K562 (cell line): ENCODE measurements at regions of chr4 and their contacts with region 1.

Region 1: GRCh38 chr4:87196927-87197326 is 23.5 kb downstream of the KLHL8 start:
- DNase-seq: no peak
- ATAC-seq: no peak
- H3K4me3 ChIP-seq: no peak overlapping the region
- H3K27ac ChIP-seq: no peak overlapping the region
- H3K4me1 ChIP-seq: no peaks in the 10 kb centered on the region
- H3K27me3 ChIP-seq: no peaks in the 10 kb centered on the region
- CTCF ChIP-seq: no peak
- EP300 ChIP-seq: no peak
- POLR2A ChIP-seq: no peak
- RAD21 ChIP-seq: no peak

Region 2: DNA sequence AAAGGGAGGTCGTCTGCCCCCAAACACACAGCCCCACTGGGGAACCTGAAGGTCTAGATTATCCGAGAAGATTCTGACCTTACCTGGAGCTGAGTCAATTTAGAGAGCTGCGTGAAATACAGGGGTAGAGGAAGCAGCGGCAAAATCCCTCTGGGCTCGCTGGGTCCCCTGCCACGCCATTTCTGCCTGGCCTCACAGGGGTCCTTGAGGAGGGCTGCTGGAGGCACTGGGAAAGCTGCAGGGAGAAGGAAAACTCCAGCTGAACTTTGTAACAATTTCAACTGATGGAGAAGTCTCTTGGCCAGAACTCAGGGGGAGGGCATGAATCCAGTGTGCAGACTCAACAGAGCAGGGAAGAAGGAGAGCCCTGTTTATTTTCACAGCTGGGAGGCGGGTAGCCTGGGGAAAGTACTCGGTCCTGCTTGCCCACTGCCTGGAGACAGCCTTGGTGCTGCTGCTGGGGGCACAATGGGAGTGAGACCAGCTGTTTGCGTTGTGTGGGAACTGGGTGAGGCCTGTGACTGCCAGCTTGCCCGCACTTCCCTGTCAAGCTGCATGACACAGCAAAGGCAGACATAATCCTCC is 743.9 kb before region 1 on chr4:
- CTCF ChIA-PET with region 1: no interaction called
- POLR2A ChIA-PET with region 1: no interaction called
- in situ Hi-C with region 1: no loop called
- intact Hi-C with region 1: no loop called
- DNase-seq: no peak
- ATAC-seq: no peak
- H3K4me3 ChIP-seq: no peak overlapping the region
- H3K27ac ChIP-seq: no peak overlapping the region
- H3K4me1 ChIP-seq: no peaks in the 10 kb centered on the region
- H3K27me3 ChIP-seq: no peaks in the 10 kb centered on the region
- CTCF ChIP-seq: no peak
- EP300 ChIP-seq: no peak
- POLR2A ChIP-seq: no peak
- RAD21 ChIP-seq: no peak

Region 3: DNA sequence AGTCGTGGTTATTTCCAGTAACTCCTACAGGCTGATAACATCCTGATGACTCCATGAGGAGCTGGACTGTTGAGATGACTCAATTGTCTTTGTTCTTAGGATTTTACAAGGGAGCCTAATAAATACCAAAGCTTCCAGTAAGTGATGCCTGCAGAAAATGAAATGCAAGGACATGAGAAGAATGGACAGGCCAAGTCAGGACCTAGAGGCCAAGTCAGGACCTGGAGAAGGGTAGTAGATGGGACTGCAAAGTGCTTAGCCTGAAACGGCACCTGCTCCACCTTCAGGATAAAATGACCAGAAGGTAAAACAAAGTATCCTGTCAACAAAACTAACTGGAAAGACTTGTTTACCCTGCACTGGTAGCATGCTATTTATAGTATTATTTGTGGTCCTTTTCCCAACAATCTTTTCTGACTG is 341.3 kb before region 1 on chr4:
- CTCF ChIA-PET with region 1: no interaction called
- POLR2A ChIA-PET with region 1: no interaction called
- in situ Hi-C with region 1: no loop called
- intact Hi-C with region 1: no loop called
- DNase-seq: no peak
- ATAC-seq: no peak
- H3K4me3 ChIP-seq: no peak overlapping the region
- H3K27ac ChIP-seq: no peak overlapping the region
- H3K4me1 ChIP-seq: no peaks in the 10 kb centered on the region
- H3K27me3 ChIP-seq: no peaks in the 10 kb centered on the region; a peak in 1 of 5 replicates
- CTCF ChIP-seq: no peak
- EP300 ChIP-seq: no peak
- POLR2A ChIP-seq: no peak
- RAD21 ChIP-seq: no peak

Region 4: DNA sequence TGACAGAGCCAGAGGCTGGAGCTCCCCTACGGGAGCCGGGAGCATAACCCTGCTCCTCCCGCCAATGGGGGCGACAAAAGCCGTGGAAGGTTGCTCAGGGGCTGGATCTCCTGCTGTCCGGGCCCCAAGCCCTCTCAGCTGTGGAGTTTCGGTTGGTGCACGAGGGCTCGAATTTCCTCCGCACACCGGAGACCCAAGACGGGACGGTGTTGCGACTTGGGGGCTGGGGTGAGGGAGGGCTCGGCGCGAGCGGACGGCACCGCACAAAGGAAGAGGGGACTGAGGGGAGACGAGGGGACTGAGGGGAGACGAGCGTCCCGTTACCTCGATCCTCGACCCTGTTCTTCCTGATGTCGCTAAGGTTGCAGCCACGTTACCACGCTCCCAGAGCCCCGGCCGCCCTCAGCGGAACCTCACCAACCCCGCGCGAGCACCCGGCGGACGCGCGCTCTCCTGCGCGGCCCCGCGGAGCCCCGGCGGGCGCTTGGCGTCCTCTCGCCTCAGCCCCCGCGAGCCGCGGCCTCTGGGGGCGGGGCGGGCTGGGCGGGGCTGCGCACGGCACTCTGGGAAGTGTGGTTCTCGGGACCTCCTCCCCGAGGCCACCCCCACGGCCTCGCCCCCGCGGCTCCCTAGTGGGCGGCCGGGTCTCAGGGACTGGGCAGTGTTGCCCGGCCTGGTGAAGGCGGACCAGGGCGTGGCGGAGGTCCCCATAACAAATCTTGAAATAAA is 23.3 kb after region 1 on chr4 and contains the start of gene KLHL8:
- CTCF ChIA-PET with region 1: no interaction called
- POLR2A ChIA-PET with region 1: interaction called, 14 read pairs
- in situ Hi-C with region 1: no loop called
- intact Hi-C with region 1: no loop called
- DNase-seq: peak; percentile 90 to 94 (median 92)
- ATAC-seq: peak; percentile 94
- H3K4me3 ChIP-seq: peak within 1 kb of the TSS; percentile 86
- H3K27ac ChIP-seq: peak within 1 kb of the TSS; percentile 89
- H3K4me1 ChIP-seq: peaks cover 0 to 10% of the 10 kb centered on the region in 2 experiments; a peak in 3 of 5 replicates
- H3K27me3 ChIP-seq: no peaks in the 10 kb centered on the region
- CTCF ChIP-seq: peak in 1 of 3 experiments; percentile 20; a peak in 1 of 6 replicates
- EP300 ChIP-seq: no peak
- POLR2A ChIP-seq: peak; percentile 94
- RAD21 ChIP-seq: no peak
- polyA plus RNA-seq, gene KLHL8: 8.7 to 10.5 TPM